CD4-positive, alpha-beta memory T cell (primary cell): ENCODE measurements at regions of chr2 and their contacts with region 1.

Region 1: GRCh38 chr2:191020221-191020741 is 6.3 kb upstream of the STAT1 start:
- DNase-seq: peak; percentile 91 to 97 (median 94)
- H3K4me3 ChIP-seq: peak overlapping the region; percentile 50 to 55
- H3K4me3 Mint-ChIP-seq: no peak overlapping the region
- H3K27ac ChIP-seq: peak overlapping the region; percentile 86
- H3K27ac Mint-ChIP-seq: no peak overlapping the region
- H3K4me1 ChIP-seq: peaks cover 76% of the 10 kb centered on the region
- H3K4me1 Mint-ChIP-seq: peaks cover 17 to 35% (median 30%) of the 10 kb centered on the region in 4 donors
- H3K27me3 ChIP-seq: no peaks in the 10 kb centered on the region
- H3K27me3 Mint-ChIP-seq: no peaks in the 10 kb centered on the region

Region 2: GRCh38 chr2:190722061-190722759 is 298.1 kb before region 1 on chr2:
- CTCF ChIA-PET with region 1: no interaction called
- POLR2A ChIA-PET with region 1: no interaction called
- intact Hi-C with region 1: no loop called
- DNase-seq: no peak
- H3K4me3 ChIP-seq: no peak overlapping the region
- H3K4me3 Mint-ChIP-seq: peak overlapping the region in 1 of 8 donors; percentile 30
- H3K27ac ChIP-seq: no peak overlapping the region
- H3K27ac Mint-ChIP-seq: peak overlapping the region in 1 of 7 donors; percentile 13
- H3K4me1 ChIP-seq: peaks cover 32% of the 10 kb centered on the region
- H3K4me1 Mint-ChIP-seq: peaks cover 15 to 25% (median 22%) of the 10 kb centered on the region in 4 donors
- H3K27me3 ChIP-seq: no peaks in the 10 kb centered on the region
- H3K27me3 Mint-ChIP-seq: peaks cover 3 to 8% of the 10 kb centered on the region in 2 donors

Region 3: GRCh38 chr2:190986221-190986953 is 33.9 kb before region 1 on chr2:
- CTCF ChIA-PET with region 1: no interaction called
- POLR2A ChIA-PET with region 1: interaction called, 4 read pairs
- intact Hi-C with region 1: loop called (anchors 5 kb)
- DNase-seq: no peak
- H3K4me3 ChIP-seq: no peak overlapping the region
- H3K4me3 Mint-ChIP-seq: no peak overlapping the region
- H3K27ac ChIP-seq: no peak overlapping the region
- H3K27ac Mint-ChIP-seq: peak overlapping the region in 5 of 7 donors; percentile 46 to 75 (median 66)
- H3K4me1 ChIP-seq: peaks cover 13% of the 10 kb centered on the region
- H3K4me1 Mint-ChIP-seq: peaks cover 14 to 30% (median 21%) of the 10 kb centered on the region in 4 donors
- H3K27me3 ChIP-seq: no peaks in the 10 kb centered on the region
- H3K27me3 Mint-ChIP-seq: no peaks in the 10 kb centered on the region

Region 4: GRCh38 chr2:190996338-190996946 is 23.8 kb before region 1 on chr2:
- CTCF ChIA-PET with region 1: interaction called, 10 read pairs
- POLR2A ChIA-PET with region 1: interaction called, 4 read pairs
- intact Hi-C with region 1: no loop called
- DNase-seq: peak in 4 of 5 donors; percentile 21 to 40 (median 37)
- H3K4me3 ChIP-seq: no peak overlapping the region
- H3K4me3 Mint-ChIP-seq: no peak overlapping the region
- H3K27ac ChIP-seq: no peak overlapping the region
- H3K27ac Mint-ChIP-seq: peak overlapping the region; percentile 75 to 92 (median 83)
- H3K4me1 ChIP-seq: peaks cover 11% of the 10 kb centered on the region
- H3K4me1 Mint-ChIP-seq: peaks cover 32 to 63% (median 36%) of the 10 kb centered on the region in 4 donors
- H3K27me3 ChIP-seq: no peaks in the 10 kb centered on the region
- H3K27me3 Mint-ChIP-seq: no peaks in the 10 kb centered on the region

Region 5: GRCh38 chr2:191003405-191004309 is 16.6 kb before region 1 on chr2:
- CTCF ChIA-PET with region 1: interaction called, 6 read pairs
- POLR2A ChIA-PET with region 1: interaction called, 17 read pairs
- intact Hi-C with region 1: loop called (anchors 2 kb)
- DNase-seq: no peak
- H3K4me3 ChIP-seq: no peak overlapping the region
- H3K4me3 Mint-ChIP-seq: peak overlapping the region in 4 of 8 donors; percentile 13 to 54 (median 26)
- H3K27ac ChIP-seq: peak overlapping the region; percentile 15
- H3K27ac Mint-ChIP-seq: peak overlapping the region; percentile 61 to 90 (median 88)
- H3K4me1 ChIP-seq: peaks cover 64% of the 10 kb centered on the region
- H3K4me1 Mint-ChIP-seq: peaks cover 40 to 85% (median 58%) of the 10 kb centered on the region in 4 donors
- H3K27me3 ChIP-seq: no peaks in the 10 kb centered on the region
- H3K27me3 Mint-ChIP-seq: no peaks in the 10 kb centered on the region

Region 6: DNA sequence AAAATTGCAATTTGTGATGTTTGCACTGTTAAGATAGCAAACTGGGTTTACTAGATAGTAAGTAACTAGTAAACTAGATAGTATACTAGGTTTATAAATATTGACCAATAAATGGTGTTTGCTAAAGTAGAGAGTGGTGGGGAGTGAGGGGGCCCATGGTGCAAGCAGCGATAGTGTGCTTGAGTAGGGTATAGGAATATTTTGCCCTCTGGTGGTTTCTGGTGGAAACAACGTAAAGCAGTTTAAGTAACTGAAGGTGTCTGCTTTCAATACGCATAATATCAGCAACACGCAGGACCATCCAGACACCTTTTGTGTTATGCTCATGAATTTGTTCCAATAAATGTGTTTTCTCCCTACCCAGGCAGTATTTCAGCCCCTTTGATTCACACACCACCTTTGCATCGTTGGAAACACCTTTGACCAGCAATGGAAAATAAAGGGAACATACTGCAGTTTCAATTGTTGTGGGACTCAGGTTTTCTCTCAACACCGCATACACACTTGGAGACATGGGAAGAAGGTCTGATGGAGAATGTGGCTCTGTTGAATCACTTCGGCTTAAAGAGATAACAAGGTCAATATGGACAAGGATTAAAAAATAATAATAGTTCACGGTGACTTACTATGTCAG is 10.4 kb after region 1 on chr2:
- CTCF ChIA-PET with region 1: interaction called, 10 read pairs
- POLR2A ChIA-PET with region 1: interaction called, 155 read pairs
- intact Hi-C with region 1: loop called (anchors 1 kb)
- DNase-seq: peak; percentile 52 to 69 (median 56)
- H3K4me3 ChIP-seq: no peak overlapping the region
- H3K4me3 Mint-ChIP-seq: peak overlapping the region in 4 of 8 donors; percentile 1 to 47 (median 7)
- H3K27ac ChIP-seq: peak overlapping the region; percentile 21
- H3K27ac Mint-ChIP-seq: peak overlapping the region; percentile 15 to 84 (median 44)
- H3K4me1 ChIP-seq: peaks cover 34% of the 10 kb centered on the region
- H3K4me1 Mint-ChIP-seq: peaks cover 21 to 37% (median 30%) of the 10 kb centered on the region in 4 donors
- H3K27me3 ChIP-seq: no peaks in the 10 kb centered on the region
- H3K27me3 Mint-ChIP-seq: no peaks in the 10 kb centered on the region

Region 7: DNA sequence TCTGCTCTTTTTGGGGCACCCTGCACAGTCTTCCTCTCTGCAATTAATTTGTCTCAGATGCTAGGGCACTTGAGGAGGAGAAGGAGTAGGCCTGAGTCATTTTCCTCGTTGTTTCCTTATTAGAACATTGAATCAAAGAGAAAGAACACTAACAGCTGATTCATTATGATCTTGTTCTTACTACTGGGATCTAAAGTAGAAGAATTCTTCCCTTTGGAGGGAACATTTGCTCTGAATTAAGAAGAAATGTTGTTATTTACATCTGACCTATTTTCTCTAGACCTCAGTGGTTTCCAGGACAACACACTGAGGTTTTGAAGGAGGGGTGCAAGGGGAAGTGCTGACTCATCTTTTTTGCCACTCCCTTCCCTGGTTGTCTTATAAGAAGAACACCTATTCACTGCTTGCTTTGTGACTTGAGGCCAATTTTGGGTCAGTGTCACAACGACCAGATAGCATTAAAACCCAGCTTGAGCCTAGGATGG is 18.0 kb after region 1 on chr2:
- CTCF ChIA-PET with region 1: interaction called, 4 read pairs
- POLR2A ChIA-PET with region 1: interaction called, 15 read pairs
- intact Hi-C with region 1: no loop called
- DNase-seq: peak; percentile 49 to 75 (median 63)
- H3K4me3 ChIP-seq: no peak overlapping the region
- H3K4me3 Mint-ChIP-seq: peak overlapping the region in 7 of 8 donors; percentile 33 to 84 (median 65)
- H3K27ac ChIP-seq: peak overlapping the region; percentile 39
- H3K27ac Mint-ChIP-seq: peak overlapping the region; percentile 87 to 98 (median 91)
- H3K4me1 ChIP-seq: peaks cover 31% of the 10 kb centered on the region
- H3K4me1 Mint-ChIP-seq: peaks cover 27 to 37% (median 36%) of the 10 kb centered on the region in 4 donors
- H3K27me3 ChIP-seq: no peaks in the 10 kb centered on the region
- H3K27me3 Mint-ChIP-seq: no peaks in the 10 kb centered on the region